Dendritic cell treated with granulocyte-macrophage colony-stimulating factor and Interleukin-4, amounts not matched to agents 40 ng/mL and 50 ng/mL, for 4 days (primary cell): ENCODE measurements at regions of chr20 and their contacts with region 1.

Region 1: DNA sequence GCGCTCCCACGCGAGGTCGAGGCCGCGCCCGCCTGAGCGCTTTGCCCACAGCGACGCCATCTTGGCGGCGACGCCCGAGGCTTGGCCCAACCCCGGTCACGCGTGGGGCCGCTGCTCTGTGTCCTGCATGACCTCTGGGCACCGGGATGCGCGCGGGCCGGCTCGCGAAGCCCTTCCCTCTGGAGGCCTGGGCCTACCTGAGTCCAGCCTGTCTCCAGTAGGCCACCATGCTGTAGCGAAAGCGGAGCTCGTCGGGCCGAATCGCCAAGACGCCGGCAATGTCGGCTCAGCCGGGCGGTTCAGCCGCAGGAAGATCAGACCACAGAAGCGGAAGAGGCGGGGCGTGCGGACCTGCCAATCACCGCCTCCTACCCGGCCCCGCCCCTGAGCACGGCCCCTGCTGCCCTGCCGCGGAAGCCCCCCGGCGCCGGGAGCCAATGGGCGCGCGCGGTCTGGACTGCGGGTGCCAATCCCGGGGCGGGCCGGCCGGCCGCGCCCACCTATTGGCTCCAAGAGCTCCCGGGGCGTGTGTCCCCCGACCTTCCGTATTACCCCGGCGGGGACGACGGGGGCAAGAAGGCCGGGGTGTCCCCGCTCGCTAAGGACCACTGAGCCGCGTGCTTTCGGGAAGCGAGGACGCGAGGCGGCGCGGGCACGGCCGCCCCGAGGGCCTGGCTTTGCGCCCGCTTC is at the start of gene ATP5F1E:
- H3K4me3 Mint-ChIP-seq: peak within 1 kb of the TSS; percentile 93
- H3K27ac Mint-ChIP-seq: peak within 1 kb of the TSS; percentile 98
- H3K4me1 Mint-ChIP-seq: peaks cover 37% of the 10 kb centered on the region
- H3K27me3 Mint-ChIP-seq: no peaks in the 10 kb centered on the region

Region 2: DNA sequence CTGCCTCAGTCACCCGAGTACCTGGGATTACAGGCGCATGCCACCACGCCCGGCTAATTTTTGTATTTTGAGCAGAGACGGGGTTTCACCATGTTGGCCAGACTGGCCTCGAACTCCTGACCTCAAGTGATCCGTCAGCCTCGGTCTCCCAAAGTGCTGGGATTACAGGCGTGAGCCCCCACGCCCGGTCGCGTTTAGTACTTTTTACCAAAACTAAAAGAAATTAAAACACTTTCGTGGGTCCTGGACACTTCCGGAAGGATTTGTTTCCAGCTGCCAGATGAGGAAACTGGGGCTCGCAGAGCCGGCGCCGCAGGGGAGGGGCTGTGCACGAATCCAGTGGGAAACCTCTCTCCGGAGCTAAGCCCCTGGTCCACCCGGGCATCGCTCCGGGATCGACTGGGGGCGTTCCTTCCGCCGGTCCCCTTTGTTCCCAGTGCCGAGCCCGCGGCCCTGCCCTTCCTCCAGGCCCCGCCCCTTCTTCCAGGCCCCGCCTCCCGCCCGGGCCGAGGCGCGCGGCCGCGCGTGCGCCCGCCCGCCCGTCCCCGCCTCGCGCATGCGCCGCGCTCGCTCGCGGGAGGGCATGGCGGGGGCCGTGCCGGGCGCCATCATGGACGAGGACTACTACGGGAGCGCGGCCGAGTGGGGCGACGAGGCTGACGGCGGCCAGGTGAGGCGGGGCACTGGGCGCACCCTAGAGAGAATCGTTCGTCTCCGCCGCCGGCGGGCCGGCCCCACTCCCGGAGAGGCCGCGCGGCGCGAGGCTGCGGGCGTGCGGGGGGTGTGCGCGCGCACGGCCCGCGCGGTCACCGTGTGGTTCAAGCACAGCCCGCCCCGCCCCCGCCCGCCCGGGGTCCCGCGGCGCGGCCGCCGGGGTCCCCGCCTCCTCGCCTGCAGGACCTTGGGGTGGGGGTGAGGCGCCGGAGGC is 51.2 kb before region 1 on chr20 and contains the start of gene NELFCD:
- intact Hi-C with region 1: loop called (anchors 10 kb)
- H3K4me3 Mint-ChIP-seq: peak within 1 kb of the TSS; percentile 77
- H3K27ac Mint-ChIP-seq: peak within 1 kb of the TSS; percentile 81
- H3K4me1 Mint-ChIP-seq: peaks cover 48% of the 10 kb centered on the region
- H3K27me3 Mint-ChIP-seq: peaks cover 5% of the 10 kb centered on the region

Region 3: GRCh38 chr20:59004763-59005522 is 27.2 kb before region 1 on chr20:
- intact Hi-C with region 1: loop called (anchors 1 kb)
- H3K4me3 Mint-ChIP-seq: peak overlapping the region; percentile 98
- H3K27ac Mint-ChIP-seq: peak overlapping the region; percentile 90
- H3K4me1 Mint-ChIP-seq: peaks cover 77% of the 10 kb centered on the region
- H3K27me3 Mint-ChIP-seq: no peaks in the 10 kb centered on the region